ENCODE measurements at regions of chr3 and their contacts with region 1.

Region 1: GRCh38 chr3:11846281-11847034 is at the start of gene TAMM41:
- DNase-seq: peak; percentile 95
- H3K4me3 Mint-ChIP-seq: peak within 1 kb of the TSS; percentile 97
- H3K27ac Mint-ChIP-seq: peak within 1 kb of the TSS; percentile 87
- H3K4me1 Mint-ChIP-seq: peaks cover 28% of the 10 kb centered on the region
- H3K27me3 Mint-ChIP-seq: no peaks in the 10 kb centered on the region
- total RNA-seq, gene TAMM41: 25.5 to 25.6 TPM

Region 2: DNA sequence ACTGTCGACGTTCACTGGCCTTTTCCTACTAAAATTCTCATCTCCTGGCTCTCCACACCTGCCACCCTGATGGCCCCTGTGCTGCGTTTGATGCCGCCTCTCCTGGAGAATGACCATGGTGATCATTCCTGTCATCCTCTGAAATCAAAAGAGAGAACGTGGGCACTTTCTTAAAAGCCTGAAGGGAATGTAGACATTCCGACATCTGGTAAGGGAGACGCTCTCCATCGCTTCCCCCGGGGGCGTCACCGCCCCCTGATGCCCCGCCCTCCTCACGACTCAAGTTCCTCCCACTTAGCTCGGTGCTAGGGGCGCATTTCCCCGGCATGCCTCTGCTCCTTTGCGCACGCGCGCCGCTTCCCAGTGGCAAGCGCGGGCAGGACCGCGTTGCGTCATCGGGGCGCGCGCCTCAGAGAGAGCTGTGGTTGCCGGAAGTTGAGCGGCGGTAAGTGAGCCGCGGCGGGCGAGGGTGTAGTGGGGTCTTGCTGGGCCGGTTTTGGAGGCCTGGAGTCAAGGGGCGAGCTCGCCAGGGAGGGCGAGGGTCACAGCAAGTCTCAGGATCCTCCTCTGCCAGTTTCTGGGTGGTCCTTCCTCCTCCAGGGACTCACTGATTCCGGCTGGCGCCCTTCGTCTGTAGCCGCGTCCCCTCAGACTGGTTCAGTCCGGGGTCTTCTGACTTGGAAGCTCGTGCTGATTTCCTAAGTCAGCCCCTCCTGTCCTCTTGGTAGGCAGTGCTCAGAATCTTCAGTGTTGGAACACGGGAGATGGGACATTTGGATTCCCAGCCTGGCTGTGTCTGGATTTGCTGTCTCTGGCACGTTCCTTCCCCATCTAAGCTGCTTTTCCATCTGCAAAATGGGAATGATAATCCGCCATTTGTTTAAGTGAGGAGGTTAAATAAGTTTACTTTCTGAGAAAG is 574.2 kb before region 1 on chr3 and contains the start of gene ATG7:
- CTCF ChIA-PET with region 1: no interaction called
- POLR2A ChIA-PET with region 1: no interaction called
- intact Hi-C with region 1: loop called (anchors 2 kb)
- DNase-seq: peak; percentile 97
- H3K4me3 Mint-ChIP-seq: peak within 1 kb of the TSS; percentile 85
- H3K27ac Mint-ChIP-seq: peak within 1 kb of the TSS; percentile 85
- H3K4me1 Mint-ChIP-seq: peaks cover 46% of the 10 kb centered on the region
- H3K27me3 Mint-ChIP-seq: no peaks in the 10 kb centered on the region
- total RNA-seq, gene ATG7: 30.5 to 33.6 TPM

Region 3: GRCh38 chr3:11643605-11644087 is 202.8 kb before region 1 on chr3 and contains the start of gene VGLL4:
- CTCF ChIA-PET with region 1: no interaction called
- POLR2A ChIA-PET with region 1: no interaction called
- intact Hi-C with region 1: loop called (anchors 2 kb)
- DNase-seq: peak; percentile 81
- H3K4me3 Mint-ChIP-seq: peak within 1 kb of the TSS; percentile 96
- H3K27ac Mint-ChIP-seq: peak within 1 kb of the TSS; percentile 97
- H3K4me1 Mint-ChIP-seq: peaks cover 27% of the 10 kb centered on the region
- H3K27me3 Mint-ChIP-seq: no peaks in the 10 kb centered on the region
- total RNA-seq, gene VGLL4: 18.2 to 18.7 TPM

Region 4: DNA sequence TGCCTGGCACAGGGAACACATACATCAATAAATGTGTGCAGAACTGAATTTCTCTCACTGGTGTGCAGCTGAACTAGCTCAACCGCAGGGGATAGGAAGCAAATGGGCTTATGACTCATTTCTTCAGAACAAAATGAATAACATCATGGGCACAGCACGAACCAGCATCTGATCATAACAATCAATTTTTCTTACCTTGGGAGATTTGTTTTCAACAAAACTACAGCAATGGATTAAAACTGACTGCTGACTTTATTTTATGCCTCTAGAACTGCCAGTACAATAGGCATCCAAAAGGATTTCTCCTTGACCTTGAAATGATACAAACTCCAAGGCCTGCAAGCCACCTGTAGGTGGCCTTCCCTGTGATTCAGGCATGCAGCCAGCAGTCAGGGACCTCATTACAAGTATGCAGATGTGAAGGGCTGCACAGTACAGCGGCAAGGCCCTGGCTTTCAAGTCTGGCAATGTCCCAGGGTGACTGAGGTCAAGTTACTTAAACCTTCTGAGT is 25.9 kb before region 1 on chr3:
- CTCF ChIA-PET with region 1: interaction called, 4 read pairs
- POLR2A ChIA-PET with region 1: no interaction called
- intact Hi-C with region 1: loop called (anchors 2 kb)
- DNase-seq: peak; percentile 59
- H3K4me3 Mint-ChIP-seq: no peak overlapping the region
- H3K27ac Mint-ChIP-seq: peak overlapping the region; percentile 70
- H3K4me1 Mint-ChIP-seq: peaks cover 19% of the 10 kb centered on the region
- H3K27me3 Mint-ChIP-seq: no peaks in the 10 kb centered on the region

Region 5: DNA sequence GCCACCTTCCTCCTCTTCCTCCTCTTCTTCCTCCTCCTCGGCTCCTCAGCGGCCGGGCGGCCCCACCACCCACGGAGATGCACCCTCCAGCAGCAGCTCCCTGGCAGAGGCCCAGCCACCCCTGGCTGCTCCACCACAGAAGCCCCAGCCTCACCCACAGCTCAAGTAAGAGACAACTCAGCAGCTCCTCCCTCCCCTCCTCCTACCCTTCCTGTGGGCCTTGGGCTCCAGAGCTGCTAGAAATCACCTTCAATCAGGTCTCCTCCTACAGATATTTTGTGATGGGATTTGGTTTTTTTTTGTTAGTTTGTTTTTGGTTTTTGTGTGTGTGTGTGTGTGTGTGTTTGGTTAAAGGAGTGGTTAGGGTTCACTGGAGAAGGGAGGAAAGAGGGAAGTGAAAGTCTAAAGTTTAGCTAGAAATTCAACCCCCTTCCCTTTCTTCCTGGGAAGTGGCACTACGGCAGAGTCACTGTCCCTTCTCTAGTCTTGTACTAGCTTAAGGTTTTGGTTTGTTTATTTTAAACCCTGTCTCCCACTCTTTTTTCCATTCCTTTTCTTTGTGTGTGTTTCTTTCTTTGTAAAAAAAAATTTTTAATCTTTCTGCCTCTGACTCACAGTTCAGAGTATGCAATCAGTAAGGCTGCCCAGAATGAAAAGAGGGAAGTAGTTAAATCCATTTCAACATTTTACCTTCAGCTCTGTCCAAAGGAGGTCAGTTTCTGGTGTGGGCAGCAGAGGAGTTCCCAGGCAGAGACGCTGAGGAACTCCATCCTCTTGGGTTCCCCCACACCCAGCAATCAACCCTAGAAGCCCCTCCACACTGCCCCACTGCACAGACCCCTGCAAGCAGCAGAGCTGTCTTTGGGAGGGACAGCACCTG is 341.2 kb after region 1 on chr3:
- CTCF ChIA-PET with region 1: no interaction called
- POLR2A ChIA-PET with region 1: no interaction called
- intact Hi-C with region 1: loop called (anchors 5 kb)
- DNase-seq: peak; percentile 89
- H3K4me3 Mint-ChIP-seq: peak overlapping the region; percentile 59
- H3K27ac Mint-ChIP-seq: peak overlapping the region; percentile 99
- H3K4me1 Mint-ChIP-seq: peaks cover 41% of the 10 kb centered on the region
- H3K27me3 Mint-ChIP-seq: peaks cover 7% of the 10 kb centered on the region